CD4-positive, alpha-beta T cell (primary cell): ENCODE measurements at regions of chr2 and their contacts with region 1.

Region 1: DNA sequence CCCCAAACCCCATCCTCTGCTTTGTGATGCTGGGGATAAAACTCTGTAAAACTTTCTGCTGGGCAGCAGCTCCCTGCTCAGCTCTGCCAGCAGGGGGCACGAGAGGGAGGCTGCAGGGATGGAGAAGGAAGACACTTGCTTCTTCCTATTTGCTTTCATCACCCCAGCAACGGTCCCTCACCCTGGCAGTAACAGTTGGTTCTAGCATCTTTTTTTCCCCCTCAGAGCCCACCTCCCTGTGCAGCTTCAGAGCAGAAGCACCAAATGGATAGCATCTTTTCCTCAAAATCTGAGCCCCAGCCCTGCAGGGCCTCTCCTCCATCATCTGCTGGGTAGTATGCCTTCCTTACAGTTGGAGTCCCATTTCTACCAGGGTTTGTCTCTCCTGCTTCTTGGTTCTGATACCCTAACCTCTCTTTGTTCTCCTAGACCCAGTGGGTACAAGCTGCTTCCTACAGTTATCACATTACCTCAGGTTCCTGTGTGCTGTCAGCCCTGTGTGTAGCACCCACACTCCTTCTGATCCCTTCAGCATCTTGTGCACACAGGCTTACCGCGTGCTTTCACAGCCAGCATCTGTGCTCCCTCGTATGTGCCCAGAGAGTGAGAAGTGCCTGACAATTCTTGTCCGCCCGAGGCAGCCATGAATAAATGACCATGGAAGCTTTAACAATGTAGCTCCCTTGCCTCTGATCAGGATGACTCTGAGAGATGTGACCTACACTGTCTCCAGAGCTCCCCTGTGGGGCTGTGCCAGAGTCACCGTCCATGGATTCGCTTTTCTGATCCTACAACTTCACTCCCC is 14.5 kb downstream of the CKAP2L start:
- DNase-seq: peak; percentile 68 to 87 (median 78)
- ATAC-seq: peak; percentile 94
- H3K4me3 ChIP-seq: peak overlapping the region; percentile 17
- H3K4me3 Mint-ChIP-seq: peak overlapping the region; percentile 12
- H3K27ac ChIP-seq: no peak overlapping the region
- H3K27ac Mint-ChIP-seq: peak overlapping the region; percentile 41
- H3K4me1 ChIP-seq: peaks cover 8% of the 10 kb centered on the region
- H3K4me1 Mint-ChIP-seq: peaks cover 12% of the 10 kb centered on the region
- H3K27me3 ChIP-seq: no peaks in the 10 kb centered on the region
- H3K27me3 Mint-ChIP-seq: no peaks in the 10 kb centered on the region
- CTCF ChIP-seq: peak; percentile 91

Region 2: GRCh38 chr2:112317303-112318158 is 432.4 kb before region 1 on chr2:
- CTCF ChIA-PET with region 1: no interaction called
- POLR2A ChIA-PET with region 1: no interaction called
- intact Hi-C with region 1: no loop called
- DNase-seq: no peak
- ATAC-seq: no peak
- H3K4me3 ChIP-seq: no peak overlapping the region
- H3K4me3 Mint-ChIP-seq: no peak overlapping the region
- H3K27ac ChIP-seq: no peak overlapping the region
- H3K27ac Mint-ChIP-seq: no peak overlapping the region
- H3K4me1 ChIP-seq: no peaks in the 10 kb centered on the region
- H3K4me1 Mint-ChIP-seq: no peaks in the 10 kb centered on the region
- H3K27me3 ChIP-seq: no peaks in the 10 kb centered on the region
- H3K27me3 Mint-ChIP-seq: no peaks in the 10 kb centered on the region
- CTCF ChIP-seq: no peak

Region 3: DNA sequence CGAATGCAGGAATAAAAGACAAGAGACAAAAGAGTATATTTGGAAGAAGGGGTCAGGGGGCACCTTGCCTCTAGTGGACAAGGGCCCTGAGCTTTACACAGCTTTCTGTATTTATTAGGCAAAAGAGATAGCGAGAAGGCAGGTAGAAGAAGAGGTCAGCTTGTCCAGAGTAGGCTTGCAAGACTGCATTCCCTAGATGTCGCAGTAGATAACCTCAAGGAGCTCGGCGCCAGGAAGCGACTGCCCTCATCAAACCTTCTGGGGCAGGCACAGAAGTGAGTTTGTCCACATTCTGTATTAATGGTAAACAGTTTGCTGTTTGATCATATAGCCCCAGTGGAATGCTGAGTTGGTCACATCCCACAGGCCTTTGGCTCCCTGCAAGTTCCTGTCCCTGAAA is 158.6 kb before region 1 on chr2:
- CTCF ChIA-PET with region 1: no interaction called
- POLR2A ChIA-PET with region 1: no interaction called
- intact Hi-C with region 1: no loop called
- DNase-seq: no peak
- ATAC-seq: no peak
- H3K4me3 ChIP-seq: no peak overlapping the region
- H3K4me3 Mint-ChIP-seq: no peak overlapping the region
- H3K27ac ChIP-seq: no peak overlapping the region
- H3K27ac Mint-ChIP-seq: no peak overlapping the region
- H3K4me1 ChIP-seq: peaks cover 3% of the 10 kb centered on the region
- H3K4me1 Mint-ChIP-seq: peaks cover 9% of the 10 kb centered on the region
- H3K27me3 ChIP-seq: no peaks in the 10 kb centered on the region
- H3K27me3 Mint-ChIP-seq: no peaks in the 10 kb centered on the region
- CTCF ChIP-seq: no peak

Region 4: GRCh38 chr2:112764071-112765044 is 14.4 kb after region 1 on chr2 and contains the start of gene CKAP2L:
- CTCF ChIA-PET with region 1: interaction called, 19 read pairs
- POLR2A ChIA-PET with region 1: no interaction called
- intact Hi-C with region 1: no loop called
- DNase-seq: peak; percentile 89 to 98 (median 93)
- ATAC-seq: peak; percentile 99
- H3K4me3 ChIP-seq: peak within 1 kb of the TSS; percentile 85
- H3K4me3 Mint-ChIP-seq: peak within 1 kb of the TSS; percentile 94
- H3K27ac ChIP-seq: peak within 1 kb of the TSS in 1 of 2 donors; percentile 18
- H3K27ac Mint-ChIP-seq: peak within 1 kb of the TSS; percentile 14
- H3K4me1 ChIP-seq: peaks cover 21% of the 10 kb centered on the region
- H3K4me1 Mint-ChIP-seq: peaks cover 37% of the 10 kb centered on the region
- H3K27me3 ChIP-seq: no peaks in the 10 kb centered on the region
- H3K27me3 Mint-ChIP-seq: no peaks in the 10 kb centered on the region
- CTCF ChIP-seq: no peak
- total RNA-seq, gene CKAP2L: 0.08 to 0.50 TPM

Region 5: GRCh38 chr2:112884869-112885505 is 135.0 kb after region 1 on chr2:
- CTCF ChIA-PET with region 1: interaction called, 25 read pairs
- POLR2A ChIA-PET with region 1: interaction called, 5 read pairs
- intact Hi-C with region 1: loop called (anchors 1 kb)
- DNase-seq: peak; percentile 39 to 78 (median 58)
- ATAC-seq: peak; percentile 78
- H3K4me3 ChIP-seq: no peak overlapping the region
- H3K4me3 Mint-ChIP-seq: no peak overlapping the region
- H3K27ac ChIP-seq: no peak overlapping the region
- H3K27ac Mint-ChIP-seq: no peak overlapping the region
- H3K4me1 ChIP-seq: peaks cover 8% of the 10 kb centered on the region
- H3K4me1 Mint-ChIP-seq: peaks cover 6% of the 10 kb centered on the region
- H3K27me3 ChIP-seq: no peaks in the 10 kb centered on the region
- H3K27me3 Mint-ChIP-seq: no peaks in the 10 kb centered on the region
- CTCF ChIP-seq: peak; percentile 95

Region 6: GRCh38 chr2:112958428-112959108 is 208.6 kb after region 1 on chr2:
- CTCF ChIA-PET with region 1: no interaction called
- POLR2A ChIA-PET with region 1: no interaction called
- intact Hi-C with region 1: loop called (anchors 2 kb)
- DNase-seq: peak in 8 of 14 experiments; percentile 8 to 77 (median 34)
- ATAC-seq: peak; percentile 77
- H3K4me3 ChIP-seq: no peak overlapping the region
- H3K4me3 Mint-ChIP-seq: no peak overlapping the region
- H3K27ac ChIP-seq: no peak overlapping the region
- H3K27ac Mint-ChIP-seq: no peak overlapping the region
- H3K4me1 ChIP-seq: no peaks in the 10 kb centered on the region
- H3K4me1 Mint-ChIP-seq: no peaks in the 10 kb centered on the region
- H3K27me3 ChIP-seq: peaks cover 0 to 3% of the 10 kb centered on the region in 2 experiments
- H3K27me3 Mint-ChIP-seq: no peaks in the 10 kb centered on the region
- CTCF ChIP-seq: peak; percentile 93